HCT116 (cell line): ENCODE measurements at regions of chr7 and their contacts with region 1.

Region 1: GRCh38 chr7:104431930-104432329 is 103.5 kb downstream of the LHFPL3 start:
- DNase-seq: no peak
- ATAC-seq: no peak
- H3K4me3 ChIP-seq: no peak overlapping the region
- H3K27ac ChIP-seq: no peak overlapping the region
- H3K4me1 ChIP-seq: no peaks in the 10 kb centered on the region
- H3K27me3 ChIP-seq: no peaks in the 10 kb centered on the region; the same call in 1 of the 2 replicates
- CTCF ChIP-seq: no peak
- POLR2A ChIP-seq: no peak
- RAD21 ChIP-seq: no peak; the same call in 1 of the 2 replicates

Region 2: GRCh38 chr7:103292122-103292521 is 1139.8 kb before region 1 on chr7:
- CTCF ChIA-PET with region 1: no interaction called
- POLR2A ChIA-PET with region 1: no interaction called
- RAD21 ChIA-PET with region 1: no interaction called
- intact Hi-C with region 1: loop called (anchors 10 kb)
- DNase-seq: no peak
- ATAC-seq: no peak
- H3K4me3 ChIP-seq: no peak overlapping the region
- H3K27ac ChIP-seq: no peak overlapping the region
- H3K4me1 ChIP-seq: peaks cover 0 to 5% of the 10 kb centered on the region in 2 experiments; a peak in 1 of 4 replicates
- H3K27me3 ChIP-seq: no peaks in the 10 kb centered on the region
- CTCF ChIP-seq: no peak
- POLR2A ChIP-seq: no peak
- RAD21 ChIP-seq: no peak

Region 3: DNA sequence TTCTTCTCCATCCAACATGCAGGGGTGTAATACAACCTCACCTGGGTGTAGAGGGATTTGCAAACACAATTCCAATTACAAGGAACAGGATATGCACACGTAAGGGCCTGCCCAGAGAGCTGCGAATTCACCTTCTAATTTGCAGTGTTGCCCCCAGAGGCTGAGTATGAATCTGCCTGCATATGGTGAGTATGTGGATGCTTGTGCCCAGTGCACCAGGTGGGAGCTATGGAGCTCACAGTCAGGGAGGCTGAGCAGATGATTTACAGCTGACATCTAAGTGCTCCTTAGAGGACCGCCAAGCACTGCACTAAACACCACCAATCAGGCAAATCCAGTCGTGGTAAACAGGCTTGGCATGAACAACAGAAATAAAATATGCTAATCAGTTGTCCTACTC is 574.5 kb before region 1 on chr7:
- CTCF ChIA-PET with region 1: no interaction called
- POLR2A ChIA-PET with region 1: no interaction called
- RAD21 ChIA-PET with region 1: no interaction called
- intact Hi-C with region 1: no loop called
- DNase-seq: no peak
- ATAC-seq: peak; percentile 67; the same call in 1 of the 2 replicates
- H3K4me3 ChIP-seq: no peak overlapping the region
- H3K27ac ChIP-seq: no peak overlapping the region
- H3K4me1 ChIP-seq: no peaks in the 10 kb centered on the region
- H3K27me3 ChIP-seq: peaks cover 4% of the 10 kb centered on the region
- CTCF ChIP-seq: peak in 1 of 3 experiments; percentile 14; a peak in 1 of 6 replicates
- POLR2A ChIP-seq: no peak
- RAD21 ChIP-seq: no peak